MCF 10A (cell line): ENCODE measurements at regions of chr1 and their contacts with region 1.

Region 1: GRCh38 chr1:151939779-151940178 is 30.5 kb upstream of the THEM4 start:
- DNase-seq: no peak
- H3K4me3 Mint-ChIP-seq: no peak overlapping the region
- H3K27ac Mint-ChIP-seq: no peak overlapping the region
- H3K4me1 Mint-ChIP-seq: peaks cover 13% of the 10 kb centered on the region
- H3K27me3 Mint-ChIP-seq: no peaks in the 10 kb centered on the region
- CTCF ChIP-seq: no peak

Region 2: DNA sequence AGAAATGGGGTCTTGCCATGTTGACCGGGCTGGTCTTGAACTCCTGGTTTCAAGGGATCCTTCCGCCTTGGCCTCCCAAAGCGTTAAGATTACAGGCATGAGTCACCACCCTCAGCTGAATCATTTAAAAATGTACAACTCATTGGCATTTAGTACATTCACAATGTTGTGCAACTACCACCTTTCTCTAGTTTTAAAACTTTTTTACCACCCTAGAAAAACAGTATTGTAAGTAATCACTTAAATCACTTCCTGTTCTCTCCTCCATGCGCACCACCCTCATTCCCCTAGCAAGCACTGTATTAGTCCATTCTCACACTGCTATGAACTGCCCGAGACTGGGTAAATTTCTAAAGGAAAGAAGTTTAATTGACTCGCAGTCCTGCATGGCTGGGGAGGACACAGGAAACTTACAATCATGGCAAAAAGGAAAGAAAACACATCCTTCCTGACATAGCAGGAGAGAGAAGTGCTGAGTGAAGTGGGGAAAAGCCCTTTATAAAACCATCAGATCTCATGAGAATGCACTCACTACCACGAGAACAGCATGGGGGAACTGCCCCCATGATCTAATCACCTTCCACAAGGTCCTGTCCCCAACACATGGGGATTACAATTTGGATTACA is 71.9 kb before region 1 on chr1:
- CTCF ChIA-PET with region 1: no interaction called
- POLR2A ChIA-PET with region 1: no interaction called
- intact Hi-C with region 1: no loop called
- DNase-seq: peak; percentile 91
- H3K4me3 Mint-ChIP-seq: peak overlapping the region; percentile 15
- H3K27ac Mint-ChIP-seq: peak overlapping the region; percentile 86
- H3K4me1 Mint-ChIP-seq: peaks cover 16% of the 10 kb centered on the region
- H3K27me3 Mint-ChIP-seq: no peaks in the 10 kb centered on the region
- CTCF ChIP-seq: no peak

Region 3: DNA sequence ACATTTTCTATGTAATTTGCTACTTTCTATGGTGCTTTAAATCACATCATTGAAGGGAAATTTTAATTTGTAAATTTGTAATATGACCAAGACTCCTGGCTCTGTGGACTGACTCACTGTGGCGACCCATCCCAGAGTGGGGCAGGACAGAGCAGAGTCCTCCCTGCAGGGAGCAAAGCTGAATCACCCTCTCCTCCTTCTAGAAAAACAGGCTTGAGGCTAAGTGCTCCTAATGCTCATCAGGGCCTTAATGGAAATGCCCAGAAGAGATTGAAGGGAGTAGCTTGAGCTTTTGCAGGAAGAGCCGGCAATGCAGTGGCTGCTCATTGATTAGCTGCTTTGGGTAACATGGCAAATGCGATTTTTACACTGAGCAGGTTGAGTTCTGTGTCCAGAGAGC is 37.1 kb after region 1 on chr1:
- CTCF ChIA-PET with region 1: interaction called, 116 read pairs
- POLR2A ChIA-PET with region 1: interaction called, 87 read pairs
- intact Hi-C with region 1: no loop called
- DNase-seq: peak; percentile 82
- H3K4me3 Mint-ChIP-seq: no peak overlapping the region
- H3K27ac Mint-ChIP-seq: peak overlapping the region; percentile 62
- H3K4me1 Mint-ChIP-seq: peaks cover 71% of the 10 kb centered on the region
- H3K27me3 Mint-ChIP-seq: no peaks in the 10 kb centered on the region
- CTCF ChIP-seq: no peak